ENCODE measurements at regions of chr7 and their contacts with region 1.

Region 1: GRCh38 chr7:139328375-139328774 is 12.8 kb upstream of the FMC1 start:
- DNase-seq: no peak

Region 2: GRCh38 chr7:138407792-138408191 is 920.6 kb before region 1 on chr7:
- CTCF ChIA-PET with region 1: interaction called, 11 read pairs
- POLR2A ChIA-PET with region 1: no interaction called
- DNase-seq: no peak

Region 3: GRCh38 chr7:139284241-139284896 is 44.0 kb before region 1 on chr7:
- CTCF ChIA-PET with region 1: no interaction called
- POLR2A ChIA-PET with region 1: no interaction called
- DNase-seq: no peak